Spleen (tissue), 13 donors: ENCODE measurements at regions of chr1 and their contacts with region 1.

Region 1: DNA sequence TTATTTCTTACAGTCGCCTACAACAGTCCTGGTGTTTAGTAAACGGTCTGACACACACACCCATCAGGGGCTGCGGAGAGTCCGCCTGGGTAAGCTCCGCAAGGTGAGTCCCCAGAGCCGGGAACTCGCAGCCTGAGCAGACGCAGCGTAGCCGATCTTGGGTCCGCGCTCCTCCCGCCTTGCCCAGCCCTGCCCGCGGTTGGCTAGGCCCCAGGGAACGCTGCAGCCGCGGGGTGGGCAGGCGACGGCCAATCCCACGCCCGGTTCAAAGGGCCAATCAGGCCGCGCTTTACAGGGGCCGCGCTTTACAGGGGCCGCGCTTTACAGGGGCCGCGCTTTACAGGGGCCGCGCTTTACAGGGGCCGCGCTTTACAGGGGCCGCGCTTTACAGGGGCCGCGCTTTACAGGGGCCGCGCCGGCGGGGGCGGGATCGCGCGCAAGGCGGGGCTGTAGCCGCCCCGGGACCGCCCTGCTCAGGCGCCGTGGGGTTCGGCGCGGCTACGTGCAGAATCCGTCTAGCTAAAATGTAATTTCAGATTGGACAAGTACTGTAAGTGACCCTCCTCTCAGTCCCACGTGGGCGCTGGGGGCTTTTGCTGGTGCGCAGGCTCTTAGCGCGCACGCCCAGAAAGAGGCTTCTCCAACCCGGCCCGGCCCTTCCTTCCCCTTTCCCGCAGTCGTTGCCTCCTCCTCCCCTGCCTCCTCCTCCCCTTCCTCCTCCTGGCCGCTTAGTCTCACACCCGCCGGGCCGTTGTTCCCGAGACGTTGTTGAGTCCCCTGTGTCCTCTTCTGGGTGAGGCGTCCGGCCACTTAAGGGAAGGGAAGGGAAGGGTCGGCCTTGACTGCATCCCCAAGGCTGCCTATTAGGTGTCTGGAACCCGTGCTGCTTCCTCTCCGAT is at the start of gene FGGY:
- DNase-seq: peak; percentile 99
- H3K4me3 ChIP-seq: peak within 1 kb of the TSS; percentile 21 to 74 (median 39)
- H3K27ac ChIP-seq: peak within 1 kb of the TSS; percentile 88 to 97 (median 94)
- H3K4me1 ChIP-seq: peaks cover 15 to 59% (median 40%) of the 10 kb centered on the region in 6 donors
- H3K27me3 ChIP-seq: no peaks in the 10 kb centered on the region
- CTCF ChIP-seq: peak in 4 of 11 experiments; percentile 14 to 34 (median 32)
- POLR2A ChIP-seq: peak; percentile 59 to 79 (median 78)
- total RNA-seq, gene FGGY: 10.8 to 27.8 (median 14.3) TPM

Region 2: GRCh38 chr1:58783993-58784757 is 512.4 kb before region 1 on chr1 and contains the start of gene JUN:
- intact Hi-C with region 1: loop called (anchors 10 kb)
- DNase-seq: peak; percentile 99
- H3K4me3 ChIP-seq: peak within 1 kb of the TSS; percentile 57 to 88 (median 69)
- H3K27ac ChIP-seq: peak within 1 kb of the TSS; percentile 98 to 99 (median 99)
- H3K4me1 ChIP-seq: peaks cover 0 to 52% (median 35%) of the 10 kb centered on the region in 6 donors
- H3K27me3 ChIP-seq: peaks cover 0 to 9% (median 0%) of the 10 kb centered on the region in 7 donors
- CTCF ChIP-seq: peak in 3 of 11 experiments; percentile 12 to 27 (median 15)
- POLR2A ChIP-seq: peak; percentile 99 to 100 (median 99)
- total RNA-seq, gene JUN: 33.7 to 162 (median 60.3) TPM

Region 3: DNA sequence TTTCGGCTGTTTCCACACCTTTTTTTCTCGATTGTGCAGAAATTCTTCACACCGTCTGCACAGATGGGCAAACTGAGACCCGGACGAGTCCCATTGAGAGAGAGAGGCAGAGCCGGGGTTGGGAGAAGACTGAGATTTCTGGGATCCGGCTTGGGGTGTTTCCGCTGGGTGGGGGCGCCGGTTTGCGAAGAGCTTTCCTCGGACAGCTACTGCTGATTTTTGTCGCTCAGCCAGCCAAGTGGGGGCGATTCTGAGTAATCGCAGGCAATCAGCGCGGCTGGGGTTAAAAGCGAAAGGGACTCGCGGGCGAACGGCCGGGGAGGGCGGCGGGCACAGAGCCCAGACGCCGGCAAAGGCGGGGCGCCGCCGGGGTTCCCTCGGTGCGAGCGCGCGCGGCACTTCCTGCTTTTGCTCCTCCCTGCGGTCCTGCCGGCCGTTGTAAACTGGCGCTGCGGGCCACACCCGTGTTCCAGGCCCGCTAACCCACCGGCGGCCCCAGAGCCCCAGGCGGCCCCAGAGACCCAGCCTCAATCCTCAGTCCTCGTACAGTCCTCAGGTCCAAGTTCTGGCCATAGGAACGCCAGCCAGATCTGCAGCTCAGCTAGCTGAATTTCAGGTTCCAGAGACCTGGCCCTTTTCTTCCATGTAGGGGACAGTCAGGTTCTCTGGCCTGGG is 480.4 kb before region 1 on chr1:
- intact Hi-C with region 1: loop called (anchors 10 kb)
- DNase-seq: peak; percentile 99
- H3K4me3 ChIP-seq: peak overlapping the region; percentile 43 to 83 (median 62)
- H3K27ac ChIP-seq: peak overlapping the region; percentile 85 to 97 (median 93)
- H3K4me1 ChIP-seq: peaks cover 17 to 64% (median 44%) of the 10 kb centered on the region in 6 donors
- H3K27me3 ChIP-seq: no peaks in the 10 kb centered on the region
- CTCF ChIP-seq: peak in 6 of 11 experiments; percentile 4 to 30 (median 16)
- POLR2A ChIP-seq: no peak

Region 4: GRCh38 chr1:58903514-58904298 is 392.9 kb before region 1 on chr1:
- intact Hi-C with region 1: loop called (anchors 10 kb)
- DNase-seq: peak; percentile 96
- H3K4me3 ChIP-seq: peak overlapping the region; percentile 30 to 72 (median 44)
- H3K27ac ChIP-seq: peak overlapping the region; percentile 80 to 97 (median 93)
- H3K4me1 ChIP-seq: peaks cover 16 to 50% (median 29%) of the 10 kb centered on the region in 6 donors
- H3K27me3 ChIP-seq: no peaks in the 10 kb centered on the region
- CTCF ChIP-seq: peak in 2 of 11 experiments; percentile 7 to 11
- POLR2A ChIP-seq: peak in 1 of 3 donors; percentile 75

Region 5: GRCh38 chr1:59237900-59238299 is 58.7 kb before region 1 on chr1:
- intact Hi-C with region 1: no loop called
- DNase-seq: no peak
- H3K4me3 ChIP-seq: no peak overlapping the region
- H3K27ac ChIP-seq: no peak overlapping the region
- H3K4me1 ChIP-seq: no peaks in the 10 kb centered on the region
- H3K27me3 ChIP-seq: no peaks in the 10 kb centered on the region
- CTCF ChIP-seq: no peak
- POLR2A ChIP-seq: no peak

Region 6: DNA sequence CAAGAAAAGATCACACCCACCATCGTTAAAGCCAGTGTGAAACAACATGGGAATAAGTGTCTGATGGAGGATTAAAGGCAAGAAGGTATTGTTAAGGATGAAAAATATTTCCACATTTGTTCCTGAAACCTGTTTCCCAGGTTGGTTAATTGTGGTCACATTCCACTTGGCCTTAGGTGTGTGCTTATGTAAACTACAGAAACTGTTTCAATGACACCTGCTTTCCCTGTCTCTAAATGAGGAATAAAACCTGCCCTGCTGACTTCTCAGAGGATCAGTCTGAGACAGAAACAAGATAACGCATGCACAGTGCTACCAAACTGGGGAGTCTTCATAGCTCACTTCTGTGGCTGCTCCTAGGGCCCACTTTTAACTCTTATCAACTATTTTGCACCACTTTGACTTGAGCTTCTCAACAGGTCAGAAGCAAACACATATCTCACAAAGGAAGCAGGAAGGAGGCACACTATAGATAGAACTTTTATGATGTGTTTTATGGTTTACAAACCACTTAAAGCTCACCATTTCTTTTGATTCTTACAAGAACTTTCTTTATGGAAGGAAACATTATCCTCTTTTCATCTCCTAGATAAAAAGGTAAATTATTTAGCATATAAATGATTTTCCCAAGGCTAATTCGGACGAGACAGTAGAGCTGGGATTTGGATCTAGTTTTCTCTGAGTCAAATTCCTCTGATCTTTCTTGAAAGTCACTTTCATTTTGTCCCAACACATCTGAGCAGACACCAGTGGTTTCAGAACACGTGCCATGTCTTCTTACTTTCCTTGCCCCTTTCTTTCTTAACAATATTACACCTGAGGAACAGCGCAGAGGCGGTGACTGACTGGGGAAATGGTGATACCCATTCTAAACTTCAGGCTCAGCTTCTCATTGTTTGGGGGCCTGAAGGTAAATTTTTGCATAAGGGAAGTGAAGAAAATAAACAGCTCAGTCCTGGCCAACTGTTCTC is 596.5 kb after region 1 on chr1:
- intact Hi-C with region 1: no loop called
- DNase-seq: no peak
- H3K4me3 ChIP-seq: no peak overlapping the region
- H3K27ac ChIP-seq: no peak overlapping the region
- H3K4me1 ChIP-seq: no peaks in the 10 kb centered on the region
- H3K27me3 ChIP-seq: no peaks in the 10 kb centered on the region
- CTCF ChIP-seq: no peak
- POLR2A ChIP-seq: no peak